Panc1 (cell line): ENCODE measurements at regions of chr12 and their contacts with region 1.

Region 1: DNA sequence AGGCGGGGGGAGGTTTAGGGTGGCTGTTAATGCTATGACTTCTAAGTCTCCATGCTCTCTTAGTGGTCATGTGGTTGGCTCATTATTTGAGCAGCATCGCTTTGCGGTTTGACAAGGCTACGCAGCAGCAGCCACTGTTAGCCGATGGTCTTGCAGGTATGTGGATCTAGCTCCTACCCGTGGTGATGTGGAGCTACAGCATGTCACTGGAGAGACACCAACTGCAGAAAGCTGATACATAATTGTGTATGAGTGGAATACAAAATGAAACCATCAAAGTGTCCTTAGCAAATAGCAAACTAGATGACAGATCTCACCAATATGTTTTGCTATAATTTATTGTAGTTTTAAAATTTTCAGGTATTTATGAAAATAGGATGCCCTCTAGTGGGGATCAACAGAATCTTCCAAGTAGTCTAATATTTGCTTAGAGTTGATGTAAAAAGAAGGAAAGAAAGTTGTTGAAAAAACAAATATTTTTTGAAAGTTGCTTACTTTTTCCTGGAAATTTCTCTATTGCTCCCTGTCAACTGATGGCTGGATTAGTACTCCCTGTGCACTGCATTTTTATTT is 94.9 kb downstream of the NAV3 start:
- DNase-seq: peak; percentile 89
- ATAC-seq: peak; percentile 98
- H3K4me3 ChIP-seq: no peak overlapping the region
- H3K27ac ChIP-seq: no peak overlapping the region
- H3K4me1 ChIP-seq: no peaks in the 10 kb centered on the region
- H3K27me3 ChIP-seq: no peaks in the 10 kb centered on the region
- CTCF ChIP-seq: peak; percentile 98

Region 2: GRCh38 chr12:77724367-77724957 is 201.2 kb before region 1 on chr12:
- CTCF ChIA-PET with region 1: interaction called, 3 read pairs
- POLR2A ChIA-PET with region 1: no interaction called
- in situ Hi-C with region 1: no loop called
- intact Hi-C with region 1: loop called (anchors 1 kb)
- DNase-seq: peak; percentile 12
- ATAC-seq: no peak
- H3K4me3 ChIP-seq: no peak overlapping the region
- H3K27ac ChIP-seq: no peak overlapping the region
- H3K4me1 ChIP-seq: no peaks in the 10 kb centered on the region
- H3K27me3 ChIP-seq: no peaks in the 10 kb centered on the region
- CTCF ChIP-seq: peak; percentile 67; the same call in 1 of the 2 replicates

Region 3: DNA sequence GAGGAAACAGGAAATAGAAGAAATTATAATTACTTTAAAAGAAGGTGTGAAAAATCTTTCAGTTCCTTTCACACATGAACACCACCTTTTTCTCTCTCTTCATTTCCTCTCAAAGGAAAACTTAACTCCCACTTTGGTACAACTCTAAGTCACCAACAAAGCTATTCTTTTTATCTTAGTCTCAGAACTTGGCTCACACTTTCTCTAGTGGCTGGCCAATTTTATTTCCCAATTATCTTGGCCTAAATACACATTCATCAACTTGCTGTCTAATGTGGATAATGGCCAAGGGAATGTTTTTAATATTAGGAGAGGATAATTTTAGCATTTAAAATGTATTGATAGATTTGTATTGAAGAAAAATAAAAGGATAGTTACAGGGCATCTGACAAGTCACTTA is 159.4 kb before region 1 on chr12:
- CTCF ChIA-PET with region 1: no interaction called
- POLR2A ChIA-PET with region 1: no interaction called
- in situ Hi-C with region 1: no loop called
- intact Hi-C with region 1: no loop called
- DNase-seq: no peak
- ATAC-seq: no peak
- H3K4me3 ChIP-seq: no peak overlapping the region
- H3K27ac ChIP-seq: no peak overlapping the region
- H3K4me1 ChIP-seq: no peaks in the 10 kb centered on the region
- H3K27me3 ChIP-seq: no peaks in the 10 kb centered on the region
- CTCF ChIP-seq: no peak

Region 4: GRCh38 chr12:77782034-77782433 is 143.6 kb before region 1 on chr12:
- CTCF ChIA-PET with region 1: no interaction called
- POLR2A ChIA-PET with region 1: no interaction called
- in situ Hi-C with region 1: no loop called
- intact Hi-C with region 1: no loop called
- DNase-seq: no peak
- ATAC-seq: no peak
- H3K4me3 ChIP-seq: no peak overlapping the region
- H3K27ac ChIP-seq: no peak overlapping the region
- H3K4me1 ChIP-seq: no peaks in the 10 kb centered on the region
- H3K27me3 ChIP-seq: no peaks in the 10 kb centered on the region
- CTCF ChIP-seq: no peak